HCT116 (cell line): ENCODE measurements at regions of chr10 and their contacts with region 1.

Region 1: GRCh38 chr10:32055813-32056600 is at the start of gene KIF5B:
- DNase-seq: peak; percentile 60
- ATAC-seq: peak; percentile 93
- H3K4me3 ChIP-seq: peak within 1 kb of the TSS; percentile 86 to 96
- H3K27ac ChIP-seq: peak within 1 kb of the TSS; percentile 94
- H3K4me1 ChIP-seq: peaks cover 8 to 26% of the 10 kb centered on the region in 2 experiments
- H3K27me3 ChIP-seq: no peaks in the 10 kb centered on the region
- CTCF ChIP-seq: no peak
- POLR2A ChIP-seq: peak; percentile 95
- RAD21 ChIP-seq: no peak
- total RNA-seq, gene KIF5B: 117 TPM

Region 2: GRCh38 chr10:31620226-31621151 is 435.5 kb before region 1 on chr10:
- CTCF ChIA-PET with region 1: no interaction called
- POLR2A ChIA-PET with region 1: no interaction called
- RAD21 ChIA-PET with region 1: no interaction called
- intact Hi-C with region 1: no loop called
- DNase-seq: no peak
- ATAC-seq: peak; percentile 32; the same call in 1 of the 2 replicates
- H3K4me3 ChIP-seq: no peak overlapping the region
- H3K27ac ChIP-seq: no peak overlapping the region
- H3K4me1 ChIP-seq: peaks cover 0 to 16% of the 10 kb centered on the region in 2 experiments; a peak in 2 of 4 replicates
- H3K27me3 ChIP-seq: no peaks in the 10 kb centered on the region
- CTCF ChIP-seq: peak in 2 of 3 experiments; percentile 27; a peak in 3 of 6 replicates
- POLR2A ChIP-seq: no peak
- RAD21 ChIP-seq: no peak

Region 3: GRCh38 chr10:31876652-31877352 is 179.2 kb before region 1 on chr10:
- CTCF ChIA-PET with region 1: no interaction called
- POLR2A ChIA-PET with region 1: no interaction called
- RAD21 ChIA-PET with region 1: no interaction called
- intact Hi-C with region 1: no loop called
- DNase-seq: no peak
- ATAC-seq: no peak
- H3K4me3 ChIP-seq: peak overlapping the region in 1 of 2 experiments; percentile 7; a peak in 1 of 4 replicates
- H3K27ac ChIP-seq: peak overlapping the region; percentile 50
- H3K4me1 ChIP-seq: peaks cover 60 to 92% of the 10 kb centered on the region in 2 experiments
- H3K27me3 ChIP-seq: no peaks in the 10 kb centered on the region
- CTCF ChIP-seq: no peak
- POLR2A ChIP-seq: no peak
- RAD21 ChIP-seq: no peak

Region 4: GRCh38 chr10:32139223-32140073 is 83.4 kb after region 1 on chr10:
- CTCF ChIA-PET with region 1: no interaction called
- POLR2A ChIA-PET with region 1: no interaction called
- RAD21 ChIA-PET with region 1: no interaction called
- intact Hi-C with region 1: loop called (anchors 5 kb)
- DNase-seq: peak; percentile 89
- ATAC-seq: peak; percentile 97
- H3K4me3 ChIP-seq: peak overlapping the region in 1 of 2 experiments; percentile 16; a peak in 1 of 4 replicates
- H3K27ac ChIP-seq: peak overlapping the region; percentile 71
- H3K4me1 ChIP-seq: peaks cover 11 to 22% of the 10 kb centered on the region in 2 experiments
- H3K27me3 ChIP-seq: no peaks in the 10 kb centered on the region
- CTCF ChIP-seq: peak in 2 of 3 experiments; percentile 23; a peak in 2 of 6 replicates
- POLR2A ChIP-seq: peak; percentile 95
- RAD21 ChIP-seq: peak; percentile 51

Region 5: GRCh38 chr10:32189400-32190084 is 133.5 kb after region 1 on chr10:
- CTCF ChIA-PET with region 1: no interaction called
- POLR2A ChIA-PET with region 1: no interaction called
- RAD21 ChIA-PET with region 1: no interaction called
- intact Hi-C with region 1: loop called (anchors 5 kb)
- DNase-seq: peak; percentile 18
- ATAC-seq: peak; percentile 71
- H3K4me3 ChIP-seq: no peak overlapping the region
- H3K27ac ChIP-seq: no peak overlapping the region
- H3K4me1 ChIP-seq: peaks cover 3 to 9% of the 10 kb centered on the region in 2 experiments; a peak in 3 of 4 replicates
- H3K27me3 ChIP-seq: no peaks in the 10 kb centered on the region
- CTCF ChIP-seq: peak in 2 of 3 experiments; percentile 24 to 32; a peak in 3 of 6 replicates
- POLR2A ChIP-seq: no peak
- RAD21 ChIP-seq: no peak

Region 6: GRCh38 chr10:32367793-32368453 is 311.9 kb after region 1 on chr10:
- CTCF ChIA-PET with region 1: no interaction called
- POLR2A ChIA-PET with region 1: no interaction called
- RAD21 ChIA-PET with region 1: no interaction called
- intact Hi-C with region 1: loop called (anchors 10 kb)
- DNase-seq: peak; percentile 48
- ATAC-seq: peak; percentile 66
- H3K4me3 ChIP-seq: no peak overlapping the region
- H3K27ac ChIP-seq: no peak overlapping the region
- H3K4me1 ChIP-seq: no peaks in the 10 kb centered on the region
- H3K27me3 ChIP-seq: no peaks in the 10 kb centered on the region
- CTCF ChIP-seq: peak; percentile 48 to 81 (median 69); a peak in 5 of 6 replicates
- POLR2A ChIP-seq: no peak
- RAD21 ChIP-seq: peak; percentile 70

Region 7: DNA sequence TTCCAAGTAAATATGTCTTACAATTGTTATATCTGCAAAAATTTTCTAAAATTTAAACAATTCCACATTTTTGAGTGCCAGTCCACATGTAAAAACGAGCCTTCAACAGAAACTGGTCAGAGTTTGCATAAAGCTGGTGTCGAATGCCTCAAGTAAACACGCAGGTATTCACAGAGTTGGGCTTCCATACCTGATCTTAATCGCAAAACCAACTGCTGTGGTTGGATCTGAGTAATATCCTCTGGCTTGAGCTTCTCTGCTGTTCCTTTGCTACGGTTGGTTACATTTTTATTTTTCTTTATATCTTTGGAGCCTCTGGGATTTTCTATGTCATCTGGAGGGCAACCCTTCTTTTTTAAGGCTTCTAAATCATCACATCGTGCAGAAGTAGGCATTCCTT is 873.6 kb after region 1 on chr10:
- CTCF ChIA-PET with region 1: no interaction called
- POLR2A ChIA-PET with region 1: no interaction called
- RAD21 ChIA-PET with region 1: no interaction called
- intact Hi-C with region 1: no loop called
- DNase-seq: no peak
- ATAC-seq: no peak
- H3K4me3 ChIP-seq: no peak overlapping the region
- H3K27ac ChIP-seq: no peak overlapping the region
- H3K4me1 ChIP-seq: no peaks in the 10 kb centered on the region
- H3K27me3 ChIP-seq: no peaks in the 10 kb centered on the region
- CTCF ChIP-seq: no peak
- POLR2A ChIP-seq: no peak
- RAD21 ChIP-seq: no peak